A549 (cell line): ENCODE measurements at regions of chr2 and their contacts with region 1.

Region 1: GRCh38 chr2:103161456-103162289 is 399.8 kb downstream of the TMEM182 start:
- DNase-seq: peak; percentile 41 to 58
- ATAC-seq: peak; percentile 73 to 88; a peak in 5 of 6 replicates
- H3K4me3 ChIP-seq: no peak overlapping the region
- H3K27ac ChIP-seq: no peak overlapping the region
- H3K4me1 ChIP-seq: no peaks in the 10 kb centered on the region
- CTCF ChIP-seq: peak; percentile 71
- EP300 ChIP-seq: no peak
- POLR2A ChIP-seq: no peak
- RAD21 ChIP-seq: peak; percentile 81 to 87

Region 2: DNA sequence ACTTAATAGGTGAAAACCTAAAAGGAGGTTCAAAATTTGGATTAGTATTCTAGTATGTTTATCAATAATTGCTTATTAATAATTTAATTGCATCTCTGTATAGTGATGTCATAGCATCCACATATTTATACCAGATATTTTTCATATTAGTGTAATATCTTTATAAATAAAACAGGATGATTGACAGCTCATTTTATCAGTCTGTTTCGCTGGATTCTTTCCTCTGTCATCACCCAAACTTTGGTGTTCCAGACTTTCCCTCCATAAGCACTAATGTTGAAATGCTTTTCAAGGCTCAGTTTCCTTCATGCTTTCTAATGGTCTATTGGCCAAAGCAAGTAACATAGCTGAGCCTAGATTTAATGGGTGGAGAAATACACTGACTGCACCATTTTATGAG is 51.4 kb before region 1 on chr2:
- CTCF ChIA-PET with region 1: no interaction called
- POLR2A ChIA-PET with region 1: no interaction called
- DNase-seq: no peak
- ATAC-seq: no peak
- H3K4me3 ChIP-seq: no peak overlapping the region
- H3K27ac ChIP-seq: no peak overlapping the region
- H3K4me1 ChIP-seq: no peaks in the 10 kb centered on the region
- CTCF ChIP-seq: no peak
- EP300 ChIP-seq: no peak
- POLR2A ChIP-seq: no peak
- RAD21 ChIP-seq: no peak

Region 3: DNA sequence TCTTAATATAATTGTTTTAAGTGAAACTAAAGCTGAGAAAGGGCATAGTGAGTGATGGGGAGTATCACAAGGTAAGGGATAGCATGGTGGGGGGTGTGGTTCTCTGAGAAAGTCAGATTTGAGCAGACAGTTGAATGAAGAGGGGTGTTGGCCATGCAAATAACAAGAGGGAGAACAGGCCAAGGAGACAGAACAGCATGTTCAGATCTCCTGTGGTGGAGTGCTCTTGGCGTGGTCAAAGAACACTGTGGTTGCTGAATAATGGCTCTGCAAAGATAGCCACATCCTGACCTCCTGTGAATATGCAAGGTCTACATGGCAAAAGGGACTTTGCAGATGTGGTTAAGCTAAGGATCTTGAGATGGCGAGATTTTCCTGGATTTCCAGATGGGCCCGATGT is 10.6 kb before region 1 on chr2:
- CTCF ChIA-PET with region 1: interaction called, 15 read pairs
- POLR2A ChIA-PET with region 1: no interaction called
- DNase-seq: no peak
- ATAC-seq: no peak
- H3K4me3 ChIP-seq: no peak overlapping the region
- H3K27ac ChIP-seq: no peak overlapping the region
- H3K4me1 ChIP-seq: no peaks in the 10 kb centered on the region
- CTCF ChIP-seq: no peak
- EP300 ChIP-seq: no peak
- POLR2A ChIP-seq: no peak
- RAD21 ChIP-seq: no peak

Region 4: DNA sequence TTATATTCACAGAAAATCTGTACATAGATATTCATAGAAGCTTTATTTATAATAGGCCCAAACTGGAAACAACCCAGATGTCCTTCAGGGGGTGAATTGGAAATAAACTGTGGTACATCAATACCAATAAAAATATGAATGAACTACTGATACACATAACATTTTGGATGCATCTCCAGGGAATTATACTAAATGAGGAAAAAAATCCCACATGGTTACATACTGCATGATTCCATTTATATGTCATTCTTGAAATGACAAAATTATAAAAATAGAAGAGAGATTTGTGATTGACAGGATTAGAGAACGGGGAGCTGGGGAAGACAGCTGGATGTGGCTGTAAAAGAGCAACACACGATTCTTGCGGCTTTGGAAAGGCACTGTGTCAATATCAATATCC is 35.1 kb after region 1 on chr2:
- CTCF ChIA-PET with region 1: no interaction called
- POLR2A ChIA-PET with region 1: no interaction called
- DNase-seq: no peak
- ATAC-seq: no peak
- H3K4me3 ChIP-seq: no peak overlapping the region
- H3K27ac ChIP-seq: no peak overlapping the region
- H3K4me1 ChIP-seq: no peaks in the 10 kb centered on the region
- CTCF ChIP-seq: no peak
- EP300 ChIP-seq: no peak
- POLR2A ChIP-seq: no peak
- RAD21 ChIP-seq: no peak

Region 5: DNA sequence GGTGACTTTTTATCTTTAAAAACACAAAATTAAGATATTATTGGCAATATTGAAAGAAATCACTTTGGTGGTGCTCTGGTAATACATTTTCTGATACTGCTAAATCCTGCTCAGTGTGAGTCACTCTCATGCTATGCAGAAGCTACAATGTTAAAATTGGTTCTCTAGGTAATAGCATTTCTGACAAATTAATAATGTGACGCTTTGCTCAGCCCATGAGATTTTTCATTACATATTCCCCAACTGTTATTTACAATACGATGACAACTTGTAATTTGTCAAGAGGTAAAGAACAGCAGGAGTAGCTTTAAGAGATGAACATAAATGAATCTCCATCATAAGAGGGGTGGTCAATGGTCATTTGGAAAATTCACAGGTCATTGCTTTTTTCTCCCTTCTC is 173.7 kb after region 1 on chr2:
- CTCF ChIA-PET with region 1: no interaction called
- POLR2A ChIA-PET with region 1: no interaction called
- DNase-seq: no peak
- ATAC-seq: no peak
- H3K4me3 ChIP-seq: no peak overlapping the region
- H3K27ac ChIP-seq: no peak overlapping the region
- H3K4me1 ChIP-seq: no peaks in the 10 kb centered on the region
- CTCF ChIP-seq: no peak
- EP300 ChIP-seq: no peak
- POLR2A ChIP-seq: no peak
- RAD21 ChIP-seq: no peak

Region 6: DNA sequence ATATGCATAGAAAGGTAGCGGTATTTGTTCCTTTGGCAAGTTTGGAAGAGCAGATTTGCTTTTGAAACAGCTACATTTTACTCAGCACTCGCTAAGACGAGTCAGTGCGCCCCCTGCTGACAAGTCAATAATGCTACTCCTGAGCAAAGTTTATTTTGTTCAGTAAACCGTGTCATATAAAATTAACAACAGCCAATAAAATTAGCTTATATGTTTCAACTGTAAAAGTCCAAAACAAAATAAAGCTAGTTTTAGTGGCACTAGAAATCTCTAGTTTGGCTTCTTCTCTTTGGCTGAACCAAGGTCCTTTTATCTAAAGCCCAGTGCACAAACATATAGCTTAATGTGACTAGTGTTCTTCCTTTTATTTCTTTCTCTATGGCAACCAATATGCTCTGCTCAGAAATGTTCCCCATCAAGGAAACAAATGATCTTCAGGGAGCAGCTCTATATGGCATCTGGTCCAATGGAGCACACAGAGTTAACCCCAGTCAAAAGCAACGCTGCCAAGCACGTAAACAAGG is 1688.0 kb after region 1 on chr2:
- CTCF ChIA-PET with region 1: interaction called, 11 read pairs
- POLR2A ChIA-PET with region 1: no interaction called
- DNase-seq: peak in 1 of 2 experiments; percentile 66
- ATAC-seq: peak; percentile 41 to 59; a peak in 3 of 6 replicates
- H3K4me3 ChIP-seq: no peak overlapping the region
- H3K27ac ChIP-seq: no peak overlapping the region
- H3K4me1 ChIP-seq: peaks cover 6% of the 10 kb centered on the region; the same call in 1 of the 3 replicates
- CTCF ChIP-seq: peak; percentile 82
- EP300 ChIP-seq: no peak
- POLR2A ChIP-seq: no peak
- RAD21 ChIP-seq: peak; percentile 65 to 70

Region 7: DNA sequence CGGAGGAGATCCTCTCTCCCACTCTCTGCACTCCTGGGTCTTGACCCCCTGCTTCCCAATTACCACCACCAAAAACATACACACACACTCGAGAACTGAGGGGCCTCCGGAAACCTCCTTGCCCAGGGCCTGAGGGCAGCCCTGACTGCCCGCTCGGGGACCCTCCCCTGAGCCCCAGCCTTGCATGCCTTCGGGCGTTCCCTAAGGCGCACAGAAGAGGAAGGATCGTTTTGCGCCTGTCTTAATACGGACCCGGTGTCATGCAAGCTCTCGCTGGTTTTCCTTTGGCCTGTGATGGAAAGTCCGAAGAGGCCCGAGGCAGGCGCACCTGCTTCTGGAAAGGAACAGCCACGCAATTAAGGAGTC is 1712.0 kb after region 1 on chr2:
- CTCF ChIA-PET with region 1: interaction called, 12 read pairs
- POLR2A ChIA-PET with region 1: no interaction called
- DNase-seq: no peak
- ATAC-seq: peak; percentile 15 to 48; a peak in 4 of 6 replicates
- H3K4me3 ChIP-seq: peak overlapping the region; percentile 70
- H3K27ac ChIP-seq: no peak overlapping the region
- H3K4me1 ChIP-seq: 0 out of 3 replicates have a peak, but pooled peaks cover 3% of the 10 kb centered on the region
- CTCF ChIP-seq: no peak
- EP300 ChIP-seq: no peak
- POLR2A ChIP-seq: no peak
- RAD21 ChIP-seq: no peak; a peak in 1 of 5 replicates

Region 8: DNA sequence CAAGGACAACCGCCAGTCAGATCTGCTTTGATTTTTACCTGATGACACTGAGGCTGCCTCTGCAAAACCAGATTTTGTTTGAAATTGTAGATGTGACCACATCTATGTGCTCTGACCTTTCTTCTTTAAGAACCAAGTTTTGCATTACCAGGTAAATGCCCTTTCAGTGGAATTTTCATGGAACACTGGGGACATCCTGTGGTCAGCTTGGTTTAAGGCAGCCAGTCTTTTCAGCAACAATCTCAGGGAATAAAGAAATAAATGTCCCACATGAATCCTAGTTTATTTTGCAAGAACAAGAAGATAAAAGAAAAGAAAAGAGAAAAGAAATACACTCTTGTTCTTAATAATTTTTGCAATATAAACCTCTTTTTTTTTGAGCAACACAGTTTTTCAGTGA is 1782.8 kb after region 1 on chr2:
- CTCF ChIA-PET with region 1: interaction called, 13 read pairs
- POLR2A ChIA-PET with region 1: no interaction called
- DNase-seq: peak; percentile 3 to 50
- ATAC-seq: peak; percentile 57 to 59; a peak in 2 of 6 replicates
- H3K4me3 ChIP-seq: no peak overlapping the region
- H3K27ac ChIP-seq: no peak overlapping the region
- H3K4me1 ChIP-seq: peaks cover 4% of the 10 kb centered on the region; the same call in 1 of the 3 replicates
- CTCF ChIP-seq: peak; percentile 51
- EP300 ChIP-seq: no peak
- POLR2A ChIP-seq: no peak
- RAD21 ChIP-seq: peak; percentile 71 to 72